T-cell (primary cell): ENCODE measurements at regions of chr3 and their contacts with region 1.

Region 1: DNA sequence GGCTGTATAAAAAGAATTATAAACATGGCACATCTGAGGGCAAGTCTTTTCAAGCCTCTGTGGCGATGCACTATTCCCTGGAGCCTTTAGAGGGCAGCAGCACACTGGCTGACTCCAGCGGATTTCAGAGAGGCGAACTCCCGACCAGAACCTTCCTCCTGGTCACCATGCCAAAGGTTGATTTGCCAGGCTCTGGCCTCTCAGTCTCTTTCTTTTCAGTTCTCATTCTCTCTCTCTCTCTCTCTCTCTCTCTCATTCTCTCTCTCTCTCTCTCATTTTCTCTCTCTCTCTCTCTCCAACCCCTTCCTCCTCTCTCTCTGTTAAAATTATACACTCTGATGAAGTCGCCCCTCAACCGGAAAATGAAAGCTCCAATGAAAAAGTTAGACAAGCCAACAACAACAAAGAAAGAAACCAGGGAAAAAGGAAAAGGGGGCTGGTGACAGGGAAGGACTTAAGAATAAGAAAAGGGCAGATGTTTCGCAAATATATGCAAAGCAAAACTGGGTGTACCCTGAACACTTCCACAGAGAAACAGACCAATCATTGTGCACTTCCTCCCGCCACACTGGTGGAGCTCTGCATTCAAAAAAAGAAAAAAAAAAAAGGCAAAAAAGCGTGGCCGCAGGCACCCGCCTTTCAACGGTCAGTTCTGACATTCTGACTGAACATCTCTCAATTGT is 90.2 kb downstream of the TIGIT start:
- DNase-seq: peak; percentile 10 to 75 (median 49)
- ATAC-seq: peak; percentile 84 to 85 (median 84)
- H3K4me3 ChIP-seq: peak overlapping the region; percentile 15 to 45
- H3K4me3 Mint-ChIP-seq: peak overlapping the region in 1 of 3 donors; percentile 68
- H3K27ac ChIP-seq: no peak overlapping the region
- H3K27ac Mint-ChIP-seq: peak overlapping the region in 1 of 2 donors; percentile 21
- H3K4me1 ChIP-seq: peaks cover 0 to 12% of the 10 kb centered on the region in 2 experiments
- H3K4me1 Mint-ChIP-seq: peaks cover 9 to 11% (median 10%) of the 10 kb centered on the region in 3 donors
- H3K27me3 ChIP-seq: no peaks in the 10 kb centered on the region
- H3K27me3 Mint-ChIP-seq: no peaks in the 10 kb centered on the region

Region 2: GRCh38 chr3:114411811-114412803 is 28.1 kb after region 1 on chr3:
- CTCF ChIA-PET with region 1: interaction called, 6 to 11 read pairs
- POLR2A ChIA-PET with region 1: interaction called in 1 of 2 experiments, 3 read pairs
- DNase-seq: no peak
- ATAC-seq: no peak
- H3K4me3 ChIP-seq: no peak overlapping the region
- H3K4me3 Mint-ChIP-seq: no peak overlapping the region
- H3K27ac ChIP-seq: no peak overlapping the region
- H3K27ac Mint-ChIP-seq: no peak overlapping the region
- H3K4me1 ChIP-seq: peaks cover 0 to 2% of the 10 kb centered on the region in 2 experiments
- H3K4me1 Mint-ChIP-seq: peaks cover 3 to 27% (median 9%) of the 10 kb centered on the region in 3 donors
- H3K27me3 ChIP-seq: no peaks in the 10 kb centered on the region
- H3K27me3 Mint-ChIP-seq: no peaks in the 10 kb centered on the region

Region 3: DNA sequence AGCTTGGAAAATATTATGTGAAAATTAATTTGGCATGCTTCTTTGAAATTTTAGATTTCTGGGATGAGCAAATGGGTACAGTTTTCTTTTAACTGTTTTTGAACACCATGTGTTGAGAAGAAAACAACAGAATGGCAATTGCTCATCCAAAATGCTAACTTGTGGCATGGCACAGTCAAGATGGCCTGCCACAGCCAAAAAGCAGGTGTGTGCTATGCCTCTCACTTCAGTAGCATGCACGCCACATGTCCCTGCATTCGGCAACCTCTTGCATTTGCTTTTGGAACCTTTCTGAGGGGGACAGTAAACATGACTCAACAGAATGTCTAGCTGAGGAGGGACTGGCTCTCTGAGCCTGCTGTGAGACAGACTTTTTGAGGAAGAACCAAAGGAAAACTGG is 48.3 kb after region 1 on chr3:
- CTCF ChIA-PET with region 1: no interaction called
- POLR2A ChIA-PET with region 1: no interaction called
- DNase-seq: no peak
- ATAC-seq: no peak
- H3K4me3 ChIP-seq: no peak overlapping the region
- H3K4me3 Mint-ChIP-seq: no peak overlapping the region
- H3K27ac ChIP-seq: no peak overlapping the region
- H3K27ac Mint-ChIP-seq: no peak overlapping the region
- H3K4me1 ChIP-seq: no peaks in the 10 kb centered on the region
- H3K4me1 Mint-ChIP-seq: peaks cover 0 to 3% (median 0%) of the 10 kb centered on the region in 3 donors
- H3K27me3 ChIP-seq: no peaks in the 10 kb centered on the region
- H3K27me3 Mint-ChIP-seq: no peaks in the 10 kb centered on the region